ENCODE measurements at regions of chr12 and their contacts with region 1.

Region 1: GRCh38 chr12:102917026-102917787 is at the start of gene PAH:
- DNase-seq: peak; percentile 91
- ATAC-seq: peak; percentile 95
- H3K4me3 ChIP-seq: peak within 1 kb of the TSS; percentile 67 to 83 (median 74)
- H3K27ac ChIP-seq: peak within 1 kb of the TSS; percentile 92
- H3K4me1 ChIP-seq: peaks cover 83% of the 10 kb centered on the region
- H3K27me3 ChIP-seq: no peaks in the 10 kb centered on the region; a peak in 1 of 5 replicates
- CTCF ChIP-seq: peak; percentile 32
- EP300 ChIP-seq: peak in 1 of 2 experiments; percentile 59; a peak in 2 of 4 replicates
- POLR2A ChIP-seq: peak; percentile 85 to 88
- RAD21 ChIP-seq: no peak
- total RNA-seq, gene PAH: 451 and 537 TPM in 2 replicates

Region 2: DNA sequence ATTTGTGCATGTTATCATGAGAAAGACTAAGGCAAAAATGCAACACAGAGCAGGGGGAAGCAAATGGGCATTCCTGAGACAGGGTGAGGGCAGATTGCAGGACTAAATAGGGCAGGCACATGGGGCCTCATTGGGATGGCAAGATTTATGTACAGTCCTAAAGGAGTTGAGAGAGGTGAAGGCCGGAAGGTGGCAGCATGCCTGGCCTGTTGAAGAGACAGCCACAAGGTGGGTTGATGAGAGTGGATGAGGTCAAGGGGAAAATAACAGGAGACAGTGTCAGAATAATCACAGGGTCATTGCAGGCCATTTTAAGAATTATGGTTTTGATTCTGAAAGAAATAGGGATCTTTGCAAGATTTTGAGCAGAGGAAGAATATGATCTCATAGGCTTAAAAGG is 21.1 kb before region 1 on chr12:
- CTCF ChIA-PET with region 1: no interaction called
- POLR2A ChIA-PET with region 1: interaction called, 83 read pairs
- in situ Hi-C with region 1: no loop called
- intact Hi-C with region 1: loop called (anchors 2 kb)
- DNase-seq: no peak
- ATAC-seq: no peak
- H3K4me3 ChIP-seq: no peak overlapping the region
- H3K27ac ChIP-seq: peak overlapping the region; percentile 44
- H3K4me1 ChIP-seq: peaks cover 63% of the 10 kb centered on the region
- H3K27me3 ChIP-seq: no peaks in the 10 kb centered on the region
- CTCF ChIP-seq: peak; percentile 31
- EP300 ChIP-seq: no peak
- POLR2A ChIP-seq: no peak
- RAD21 ChIP-seq: no peak

Region 3: DNA sequence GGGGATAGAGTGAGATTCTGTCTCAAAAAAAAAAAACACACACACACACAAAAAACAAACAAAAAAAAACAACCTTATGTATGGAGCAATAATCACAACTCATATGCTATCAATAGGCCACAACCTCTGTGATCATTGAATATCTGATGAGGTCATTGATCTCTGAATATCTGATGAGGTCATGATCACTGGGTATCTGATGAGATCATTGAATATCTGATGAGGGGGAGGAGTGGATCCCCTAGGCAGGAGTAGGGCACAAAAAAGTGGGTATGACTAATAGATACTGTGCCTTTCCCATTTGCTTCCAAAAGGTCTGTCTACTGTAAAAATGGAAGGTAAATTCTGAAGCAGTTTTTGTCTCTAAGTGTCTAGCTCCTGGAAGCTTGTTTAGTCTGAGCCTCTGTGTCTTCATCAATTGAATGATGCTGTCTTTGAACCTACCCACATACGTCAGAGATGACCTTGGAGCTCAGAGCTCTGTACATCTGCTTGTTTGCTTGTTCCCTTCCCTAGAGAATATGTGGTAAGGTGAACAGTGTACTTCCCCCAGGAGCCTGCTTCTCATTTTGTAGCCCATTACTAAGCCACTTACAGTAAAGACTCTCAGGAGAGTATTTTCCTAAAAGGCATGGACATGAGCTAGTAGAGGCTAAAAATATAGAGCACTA is 13.7 kb before region 1 on chr12:
- CTCF ChIA-PET with region 1: no interaction called
- POLR2A ChIA-PET with region 1: interaction called, 83 read pairs
- in situ Hi-C with region 1: no loop called
- intact Hi-C with region 1: loop called (anchors 2 kb)
- DNase-seq: peak; percentile 92
- ATAC-seq: peak; percentile 61
- H3K4me3 ChIP-seq: no peak overlapping the region
- H3K27ac ChIP-seq: peak overlapping the region; percentile 96
- H3K4me1 ChIP-seq: peaks cover 100% of the 10 kb centered on the region
- H3K27me3 ChIP-seq: no peaks in the 10 kb centered on the region
- CTCF ChIP-seq: no peak
- EP300 ChIP-seq: peak in 1 of 2 experiments; percentile 76; a peak in 2 of 4 replicates
- POLR2A ChIP-seq: no peak
- RAD21 ChIP-seq: no peak